HepG2 (cell line): ENCODE measurements at regions of chr7 and their contacts with region 1.

Region 1: DNA sequence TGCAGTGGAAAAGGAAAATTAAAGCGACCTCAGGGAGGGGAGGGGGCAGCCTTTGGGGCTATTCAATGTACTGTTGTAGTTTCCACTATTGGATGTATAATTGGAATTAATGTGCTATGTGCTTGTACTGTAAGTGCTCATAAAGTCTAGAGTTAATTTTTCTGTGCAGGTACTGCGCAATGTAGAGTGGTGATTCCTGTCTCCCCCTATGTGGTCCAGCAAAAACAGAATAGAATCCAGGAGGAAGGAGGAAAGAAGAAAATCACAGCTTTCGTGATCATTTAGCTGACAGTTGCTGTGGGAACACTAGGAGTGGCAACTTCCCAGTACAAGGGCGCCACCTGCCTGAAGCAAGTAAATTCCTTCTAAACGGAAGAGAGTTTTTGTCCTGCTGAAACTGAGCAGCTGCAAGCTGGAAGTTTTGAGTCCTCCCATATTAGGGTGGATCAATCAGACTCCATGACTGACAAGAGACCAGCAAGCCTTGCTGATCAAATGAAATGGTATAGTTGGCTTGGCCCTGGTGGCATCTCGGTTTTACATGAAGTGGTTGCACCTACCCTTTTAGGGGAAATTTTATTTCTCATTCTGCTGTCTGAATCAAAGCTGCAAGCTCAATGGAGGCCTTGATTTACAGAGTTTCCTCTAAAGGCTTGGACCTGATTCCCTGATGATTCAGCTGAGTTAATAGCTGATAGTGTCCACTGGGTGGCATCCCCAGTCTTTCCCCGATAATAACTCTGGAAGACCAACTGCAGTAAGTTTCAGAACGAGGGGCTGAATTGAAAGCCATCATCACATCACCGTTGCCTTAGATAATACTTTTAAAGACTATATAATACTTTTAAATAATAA is 299.8 kb downstream of the HGF start:
- DNase-seq: peak; percentile 42
- ATAC-seq: peak; percentile 92
- H3K4me3 ChIP-seq: no peak overlapping the region
- H3K27ac ChIP-seq: no peak overlapping the region
- H3K4me1 ChIP-seq: peaks cover 7% of the 10 kb centered on the region; the same call in 1 of the 2 replicates
- H3K27me3 ChIP-seq: no peaks in the 10 kb centered on the region
- CTCF ChIP-seq: peak; percentile 84
- EP300 ChIP-seq: no peak
- POLR2A ChIP-seq: no peak
- RAD21 ChIP-seq: peak; percentile 41

Region 2: GRCh38 chr7:81256991-81257390 is 213.1 kb before region 1 on chr7:
- CTCF ChIA-PET with region 1: no interaction called
- POLR2A ChIA-PET with region 1: no interaction called
- in situ Hi-C with region 1: no loop called
- intact Hi-C with region 1: loop called (anchors 10 kb)
- DNase-seq: peak; percentile 3
- ATAC-seq: peak; percentile 58
- H3K4me3 ChIP-seq: no peak overlapping the region
- H3K27ac ChIP-seq: no peak overlapping the region
- H3K4me1 ChIP-seq: no peaks in the 10 kb centered on the region
- H3K27me3 ChIP-seq: no peaks in the 10 kb centered on the region
- CTCF ChIP-seq: peak; percentile 62
- EP300 ChIP-seq: no peak
- POLR2A ChIP-seq: no peak
- RAD21 ChIP-seq: peak; percentile 62

Region 3: DNA sequence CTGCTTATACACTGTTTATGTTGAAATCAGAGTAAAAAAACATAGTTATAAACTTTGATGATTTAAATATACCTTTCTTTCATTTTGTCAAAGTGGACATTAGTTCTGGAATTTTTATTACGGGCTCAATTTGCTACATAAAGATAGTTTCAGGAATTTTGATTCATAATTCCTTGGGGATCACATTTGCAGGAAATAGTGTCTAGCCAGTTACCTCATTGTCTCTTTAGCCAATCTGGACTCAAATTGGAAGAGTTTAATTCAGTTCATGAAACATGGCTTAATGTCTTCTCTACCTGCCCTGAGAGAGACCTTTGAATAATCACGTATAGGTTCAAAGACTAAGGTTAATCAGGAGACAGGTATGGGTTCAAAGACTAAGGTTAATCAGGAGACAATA is 37.1 kb after region 1 on chr7:
- CTCF ChIA-PET with region 1: no interaction called
- POLR2A ChIA-PET with region 1: no interaction called
- in situ Hi-C with region 1: no loop called
- intact Hi-C with region 1: no loop called
- DNase-seq: no peak
- ATAC-seq: no peak
- H3K4me3 ChIP-seq: no peak overlapping the region
- H3K27ac ChIP-seq: no peak overlapping the region
- H3K4me1 ChIP-seq: no peaks in the 10 kb centered on the region
- H3K27me3 ChIP-seq: no peaks in the 10 kb centered on the region
- CTCF ChIP-seq: no peak
- EP300 ChIP-seq: no peak
- POLR2A ChIP-seq: no peak
- RAD21 ChIP-seq: no peak

Region 4: GRCh38 chr7:81957517-81957916 is 487.4 kb after region 1 on chr7:
- CTCF ChIA-PET with region 1: no interaction called
- POLR2A ChIA-PET with region 1: no interaction called
- in situ Hi-C with region 1: no loop called
- intact Hi-C with region 1: no loop called
- DNase-seq: no peak
- ATAC-seq: no peak
- H3K4me3 ChIP-seq: no peak overlapping the region
- H3K27ac ChIP-seq: no peak overlapping the region
- H3K4me1 ChIP-seq: no peaks in the 10 kb centered on the region
- H3K27me3 ChIP-seq: no peaks in the 10 kb centered on the region
- CTCF ChIP-seq: no peak
- EP300 ChIP-seq: no peak
- POLR2A ChIP-seq: no peak
- RAD21 ChIP-seq: no peak